ENCODE measurements at regions of chr12 and their contacts with region 1.

Region 1: DNA sequence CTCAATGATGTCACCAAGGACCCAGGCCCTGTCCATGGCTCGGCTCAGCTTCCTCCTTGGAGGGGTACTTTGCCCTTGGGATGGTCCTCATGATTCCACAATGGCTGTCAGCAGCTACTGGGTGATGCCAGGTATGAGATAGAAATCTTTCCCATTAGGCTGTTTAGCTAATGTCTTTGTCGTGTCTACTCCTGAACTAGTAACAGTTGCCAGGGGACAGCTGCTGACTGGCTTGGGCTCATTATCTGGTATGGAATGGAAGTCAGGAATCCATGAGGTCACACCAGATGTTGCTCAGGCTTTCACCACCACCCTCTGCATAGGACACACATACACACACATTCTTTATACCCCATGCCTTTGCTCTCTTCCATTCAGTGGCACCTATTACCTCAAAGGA is 9.2 kb downstream of the PRPH start:
- H3K4me3 ChIP-seq: no peak overlapping the region
- H3K27ac ChIP-seq: no peak overlapping the region
- H3K4me1 ChIP-seq: no peaks in the 10 kb centered on the region
- CTCF ChIP-seq: no peak

Region 2: GRCh38 chr12:49279706-49280159 is 24.4 kb before region 1 on chr12:
- CTCF ChIA-PET with region 1: no interaction called
- POLR2A ChIA-PET with region 1: no interaction called
- H3K4me3 ChIP-seq: no peak overlapping the region
- H3K27ac ChIP-seq: peak overlapping the region; percentile 65
- H3K4me1 ChIP-seq: peaks cover 4% of the 10 kb centered on the region; the same call in 1 of the 2 replicates
- CTCF ChIP-seq: no peak

Region 3: GRCh38 chr12:49342066-49342913 is 38.1 kb after region 1 on chr12:
- CTCF ChIA-PET with region 1: interaction called, 15 read pairs
- POLR2A ChIA-PET with region 1: no interaction called
- H3K4me3 ChIP-seq: peak overlapping the region; percentile 20
- H3K27ac ChIP-seq: peak overlapping the region; percentile 21; the same call in 1 of the 2 replicates
- H3K4me1 ChIP-seq: peaks cover 22% of the 10 kb centered on the region
- CTCF ChIP-seq: peak; percentile 88

Region 4: GRCh38 chr12:49366652-49367380 is 62.7 kb after region 1 on chr12:
- CTCF ChIA-PET with region 1: no interaction called
- POLR2A ChIA-PET with region 1: no interaction called
- H3K4me3 ChIP-seq: peak overlapping the region; percentile 97
- H3K27ac ChIP-seq: peak overlapping the region; percentile 99
- H3K4me1 ChIP-seq: peaks cover 9% of the 10 kb centered on the region
- CTCF ChIP-seq: peak; percentile 90